ENCODE measurements at regions of chr6 and their contacts with region 1.

Region 1: GRCh38 chr6:85678602-85679444 is 36.1 kb upstream of the SYNCRIP start:
- DNase-seq: peak; percentile 98 to 99
- ATAC-seq: peak; percentile 91 to 99 (median 92)
- H3K4me3 ChIP-seq: peak overlapping the region; percentile 87
- H3K4me3 Mint-ChIP-seq: peak overlapping the region; percentile 99
- H3K27ac ChIP-seq: peak overlapping the region; percentile 82
- H3K27ac Mint-ChIP-seq: peak overlapping the region; percentile 99 to 100
- H3K4me1 ChIP-seq: peaks cover 8% of the 10 kb centered on the region
- H3K4me1 Mint-ChIP-seq: peaks cover 46 to 49% of the 10 kb centered on the region in 2 donors
- H3K27me3 ChIP-seq: no peaks in the 10 kb centered on the region
- H3K27me3 Mint-ChIP-seq: no peaks in the 10 kb centered on the region
- CTCF ChIP-seq: no peak

Region 2: GRCh38 chr6:85354761-85355618 is 323.8 kb before region 1 on chr6:
- intact Hi-C with region 1: loop called (anchors 10 kb)
- DNase-seq: peak; percentile 40 to 70
- ATAC-seq: peak; percentile 81 to 87 (median 82)
- H3K4me3 ChIP-seq: no peak overlapping the region
- H3K4me3 Mint-ChIP-seq: no peak overlapping the region
- H3K27ac ChIP-seq: no peak overlapping the region
- H3K27ac Mint-ChIP-seq: no peak overlapping the region
- H3K4me1 ChIP-seq: no peaks in the 10 kb centered on the region
- H3K4me1 Mint-ChIP-seq: no peaks in the 10 kb centered on the region
- H3K27me3 ChIP-seq: peaks cover 2% of the 10 kb centered on the region
- H3K27me3 Mint-ChIP-seq: peaks cover 10 to 11% of the 10 kb centered on the region in 2 donors
- CTCF ChIP-seq: peak; percentile 97

Region 3: DNA sequence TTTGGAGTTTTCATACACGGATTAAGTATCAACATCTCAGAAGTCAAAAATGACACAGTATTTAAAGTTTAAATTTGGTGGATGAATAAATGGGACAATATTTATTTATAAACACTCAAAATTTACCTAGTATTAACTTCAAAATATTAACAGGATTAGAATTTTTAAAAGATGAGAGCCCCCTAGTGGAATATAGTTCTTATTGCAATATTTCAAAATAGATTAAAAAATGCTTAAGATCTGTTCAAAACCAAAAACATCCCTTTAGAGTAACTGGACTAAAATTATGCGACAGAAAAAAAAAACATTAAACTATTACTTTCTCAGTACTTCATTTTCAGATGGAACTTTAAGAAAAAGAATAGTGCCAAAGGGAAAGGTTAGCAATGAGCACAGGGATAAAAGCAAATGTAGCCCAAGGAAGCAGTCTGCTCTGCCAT is 141.7 kb before region 1 on chr6:
- intact Hi-C with region 1: loop called (anchors 10 kb)
- DNase-seq: peak in 1 of 2 donors; percentile 11
- ATAC-seq: no peak
- H3K4me3 ChIP-seq: no peak overlapping the region
- H3K4me3 Mint-ChIP-seq: no peak overlapping the region
- H3K27ac ChIP-seq: no peak overlapping the region
- H3K27ac Mint-ChIP-seq: peak overlapping the region in 1 of 2 donors; percentile 43
- H3K4me1 ChIP-seq: no peaks in the 10 kb centered on the region
- H3K4me1 Mint-ChIP-seq: no peaks in the 10 kb centered on the region
- H3K27me3 ChIP-seq: no peaks in the 10 kb centered on the region
- H3K27me3 Mint-ChIP-seq: no peaks in the 10 kb centered on the region
- CTCF ChIP-seq: peak; percentile 85

Region 4: DNA sequence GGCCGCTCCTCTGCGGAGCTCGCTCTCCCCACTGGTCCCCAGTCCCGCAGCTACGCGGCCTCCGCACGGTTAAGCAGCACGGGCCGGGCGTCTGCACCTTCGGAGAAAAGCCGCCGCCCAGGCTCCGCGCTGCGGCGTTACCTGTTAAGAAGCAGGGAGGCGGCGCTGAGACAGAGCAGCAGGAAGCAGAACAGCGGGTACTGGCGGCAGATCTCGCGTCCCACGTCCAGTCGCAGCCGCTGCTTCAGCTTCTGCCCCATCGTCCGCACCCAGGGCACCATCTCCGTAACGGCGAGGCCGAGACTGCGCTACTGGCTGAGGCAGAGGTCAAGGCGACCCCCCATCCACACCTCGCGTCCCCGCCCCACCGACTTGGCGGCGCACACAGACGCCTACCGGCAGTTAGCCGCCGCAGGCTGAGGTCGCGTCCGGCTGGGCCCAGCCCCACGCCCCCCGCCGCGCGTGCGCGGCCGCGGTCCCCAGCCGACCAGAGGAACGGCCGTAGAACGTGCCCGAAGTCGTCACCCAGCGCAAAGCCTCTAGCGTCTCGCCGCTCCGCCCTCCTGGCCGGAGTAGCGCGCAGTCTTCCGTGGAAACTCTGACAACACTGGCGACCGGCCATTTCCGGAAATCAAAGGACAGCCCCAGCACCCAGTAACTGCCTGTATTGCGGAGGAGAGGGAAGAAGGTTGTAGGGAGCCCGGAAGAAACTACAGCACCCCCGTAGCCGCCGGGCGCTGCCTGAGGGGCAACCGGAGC is 85.2 kb before region 1 on chr6 and contains the start of gene SNX14:
- intact Hi-C with region 1: loop called (anchors 1 kb)
- DNase-seq: peak; percentile 75 to 86
- ATAC-seq: peak; percentile 73 to 92 (median 79)
- H3K4me3 ChIP-seq: peak within 1 kb of the TSS; percentile 94
- H3K4me3 Mint-ChIP-seq: peak within 1 kb of the TSS; percentile 96
- H3K27ac ChIP-seq: peak within 1 kb of the TSS; percentile 91
- H3K27ac Mint-ChIP-seq: peak within 1 kb of the TSS; percentile 92 to 98
- H3K4me1 ChIP-seq: peaks cover 11% of the 10 kb centered on the region
- H3K4me1 Mint-ChIP-seq: peaks cover 52 to 56% of the 10 kb centered on the region in 2 donors
- H3K27me3 ChIP-seq: no peaks in the 10 kb centered on the region
- H3K27me3 Mint-ChIP-seq: no peaks in the 10 kb centered on the region
- CTCF ChIP-seq: no peak
- total RNA-seq, gene SNX14: 73.0 to 109 (median 80.3) TPM

Region 5: DNA sequence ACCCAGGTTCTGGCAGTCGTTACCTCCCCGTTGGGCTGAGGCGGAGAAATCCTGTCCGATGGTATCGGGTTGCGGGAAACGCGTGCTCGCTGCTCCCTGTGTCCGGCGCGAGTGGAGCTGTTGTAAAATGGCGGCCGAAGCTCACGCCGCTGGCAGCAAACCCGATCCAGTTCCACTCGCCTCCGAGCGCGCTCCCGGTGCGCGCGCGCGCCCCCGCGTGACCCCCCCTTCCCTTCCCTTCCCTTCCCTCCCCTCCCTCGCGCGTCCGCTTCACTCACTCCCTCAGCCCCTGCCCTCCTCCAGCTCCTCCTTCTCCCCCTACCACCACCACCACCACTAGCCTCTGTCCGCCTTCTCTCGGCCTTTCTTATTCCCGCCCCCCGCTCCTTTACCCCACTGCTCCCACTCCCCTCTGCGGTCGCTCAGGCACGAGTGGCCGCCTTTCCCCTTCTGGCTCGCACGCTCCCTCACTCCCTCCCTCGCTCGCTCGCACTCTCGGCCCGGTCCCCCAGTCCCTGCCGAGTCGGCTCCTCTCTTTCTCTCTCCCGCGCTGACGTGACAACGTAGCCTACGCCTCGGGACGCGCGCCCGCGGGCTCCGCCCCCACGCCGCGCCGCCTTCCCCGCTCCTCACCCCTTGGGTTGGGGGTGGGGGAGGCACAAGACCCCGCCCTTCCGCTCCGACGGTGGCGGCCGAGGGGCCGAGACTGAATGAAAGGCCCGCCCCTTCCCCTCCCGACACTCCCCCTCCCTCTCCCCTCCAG is 35.9 kb before region 1 on chr6 and contains the start of gene SYNCRIP:
- intact Hi-C with region 1: loop called (anchors 1 kb)
- DNase-seq: peak; percentile 96 to 99
- ATAC-seq: peak; percentile 81 to 95 (median 85)
- H3K4me3 ChIP-seq: peak within 1 kb of the TSS; percentile 95
- H3K4me3 Mint-ChIP-seq: peak within 1 kb of the TSS; percentile 87
- H3K27ac ChIP-seq: peak within 1 kb of the TSS; percentile 100
- H3K27ac Mint-ChIP-seq: peak within 1 kb of the TSS; percentile 94 to 98
- H3K4me1 ChIP-seq: peaks cover 10% of the 10 kb centered on the region
- H3K4me1 Mint-ChIP-seq: peaks cover 33 to 58% of the 10 kb centered on the region in 2 donors
- H3K27me3 ChIP-seq: no peaks in the 10 kb centered on the region
- H3K27me3 Mint-ChIP-seq: no peaks in the 10 kb centered on the region
- CTCF ChIP-seq: no peak
- total RNA-seq, gene SYNCRIP: 65.8 to 99.1 (median 80.9) TPM